Transverse colon (tissue), 4 donors: ENCODE measurements at regions of chr12 and their contacts with region 1.

Region 1: DNA sequence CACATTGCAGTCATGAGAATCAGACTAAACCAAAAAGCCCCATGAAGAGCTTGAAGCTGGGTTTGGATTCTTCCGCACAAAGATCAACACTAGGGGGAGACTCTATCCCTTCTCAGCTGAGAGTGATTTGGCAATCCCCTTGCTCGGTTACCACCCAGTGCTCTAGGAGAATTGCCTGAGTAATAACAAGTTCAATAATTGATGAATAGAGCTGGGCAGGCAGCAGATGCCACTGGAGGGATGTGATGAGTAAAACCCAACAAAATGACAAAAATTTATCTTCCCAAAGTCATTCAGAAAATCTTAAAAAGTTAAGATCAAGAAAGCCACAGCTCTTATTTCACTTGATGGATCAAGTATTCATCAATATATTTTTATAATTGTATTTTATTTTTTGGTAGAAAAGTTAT is 185.6 kb upstream of the ARID2 start:
- DNase-seq: peak; percentile 39
- H3K4me3 ChIP-seq: no peak overlapping the region
- H3K27ac ChIP-seq: no peak overlapping the region
- H3K4me1 ChIP-seq: no peaks in the 10 kb centered on the region
- H3K27me3 ChIP-seq: no peaks in the 10 kb centered on the region
- CTCF ChIP-seq: peak; percentile 70 to 77 (median 75)
- EP300 ChIP-seq: no peak
- POLR2A ChIP-seq: no peak

Region 2: GRCh38 chr12:45183246-45183645 is 360.7 kb before region 1 on chr12:
- in situ Hi-C with region 1: loop called in 1 of 4 experiments (anchors 25 kb)
- intact Hi-C with region 1: no loop called
- DNase-seq: no peak
- H3K4me3 ChIP-seq: no peak overlapping the region
- H3K27ac ChIP-seq: no peak overlapping the region
- H3K4me1 ChIP-seq: no peaks in the 10 kb centered on the region
- H3K27me3 ChIP-seq: no peaks in the 10 kb centered on the region
- CTCF ChIP-seq: peak in 4 of 5 experiments; percentile 12 to 41 (median 17)
- EP300 ChIP-seq: no peak
- POLR2A ChIP-seq: no peak

Region 3: DNA sequence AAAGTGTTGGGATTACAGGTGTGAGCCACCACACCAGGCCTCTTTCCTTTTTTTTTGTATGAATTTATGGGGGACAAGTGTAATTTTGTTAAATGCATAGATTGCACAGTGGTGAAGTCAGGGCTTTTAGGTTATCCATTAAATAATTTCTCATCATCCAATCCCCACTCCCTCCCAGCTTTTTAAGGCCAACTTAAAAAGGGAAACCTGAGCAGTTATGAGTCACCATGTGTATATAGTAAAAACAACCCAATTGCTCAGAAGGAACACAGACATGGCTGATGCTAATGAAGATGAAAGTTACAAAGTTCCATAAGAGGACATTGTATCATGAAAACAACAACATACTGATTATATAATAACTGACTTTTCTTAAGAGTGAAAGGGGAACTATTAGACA is 160.0 kb after region 1 on chr12:
- in situ Hi-C with region 1: loop called in 1 of 4 experiments (anchors 25 kb)
- intact Hi-C with region 1: no loop called
- DNase-seq: no peak
- H3K4me3 ChIP-seq: no peak overlapping the region
- H3K27ac ChIP-seq: no peak overlapping the region
- H3K4me1 ChIP-seq: peaks cover 0 to 4% (median 0%) of the 10 kb centered on the region in 4 donors
- H3K27me3 ChIP-seq: no peaks in the 10 kb centered on the region
- CTCF ChIP-seq: no peak
- EP300 ChIP-seq: no peak
- POLR2A ChIP-seq: no peak

Region 4: GRCh38 chr12:45728630-45729232 is 184.8 kb after region 1 on chr12:
- in situ Hi-C with region 1: loop called in 1 of 4 experiments (anchors 25 kb)
- intact Hi-C with region 1: loop called (anchors 10 kb)
- DNase-seq: peak; percentile 98
- H3K4me3 ChIP-seq: peak overlapping the region; percentile 89 to 95 (median 94)
- H3K27ac ChIP-seq: peak overlapping the region; percentile 97 to 100 (median 100)
- H3K4me1 ChIP-seq: peaks cover 19 to 44% (median 33%) of the 10 kb centered on the region in 4 donors
- H3K27me3 ChIP-seq: no peaks in the 10 kb centered on the region
- CTCF ChIP-seq: peak; percentile 84 to 99 (median 93)
- EP300 ChIP-seq: peak; percentile 51
- POLR2A ChIP-seq: peak; percentile 95